A673 (cell line): ENCODE measurements at regions of chr5 and their contacts with region 1.

Region 1: DNA sequence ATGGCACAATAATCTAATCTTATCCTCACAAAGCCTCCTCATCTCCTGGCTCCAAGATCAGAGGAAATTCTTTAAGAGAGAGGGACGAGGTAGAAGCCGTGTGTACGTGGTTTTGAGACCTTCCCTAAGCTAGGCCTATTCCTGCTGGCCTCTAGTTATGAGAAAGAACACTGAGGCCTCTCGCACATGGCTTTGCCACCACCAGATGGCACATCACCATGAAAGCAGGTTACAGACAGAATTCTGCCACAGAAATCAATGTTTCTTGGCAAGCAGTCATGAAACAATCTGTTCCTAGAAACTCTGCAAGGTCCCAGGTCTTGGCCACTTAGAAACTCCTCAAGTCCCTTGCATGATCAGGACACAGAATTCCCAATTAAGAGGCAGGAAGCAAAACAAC is 268.2 kb upstream of the TAS2R1 start:
- DNase-seq: peak; percentile 13
- H3K4me3 ChIP-seq: no peak overlapping the region
- H3K27ac ChIP-seq: no peak overlapping the region
- H3K4me1 ChIP-seq: no peaks in the 10 kb centered on the region
- H3K27me3 ChIP-seq: peaks cover 4% of the 10 kb centered on the region
- CTCF ChIP-seq: peak; percentile 48

Region 2: DNA sequence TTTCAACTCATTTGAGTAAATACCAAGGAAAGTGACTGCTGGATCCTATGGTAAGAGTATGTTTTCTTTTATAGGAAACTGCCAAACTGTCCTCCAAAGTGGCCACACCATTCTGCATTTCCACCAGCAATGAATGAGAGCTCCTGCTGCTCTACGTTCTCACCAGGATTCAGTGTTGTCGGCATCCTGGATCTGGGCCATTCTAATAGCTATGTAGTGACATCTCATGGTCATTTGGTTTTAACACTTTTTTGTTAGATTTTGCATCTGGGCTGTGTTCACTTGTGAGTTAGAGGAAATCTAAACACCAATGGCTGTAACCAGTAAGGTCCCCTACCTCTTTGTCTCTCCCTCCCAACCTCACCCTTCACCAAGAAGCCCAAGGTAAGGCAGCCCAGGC is 235.5 kb after region 1 on chr5:
- CTCF ChIA-PET with region 1: no interaction called
- POLR2A ChIA-PET with region 1: no interaction called
- intact Hi-C with region 1: loop called (anchors 10 kb)
- DNase-seq: peak; percentile 12
- H3K4me3 ChIP-seq: no peak overlapping the region
- H3K27ac ChIP-seq: no peak overlapping the region
- H3K4me1 ChIP-seq: no peaks in the 10 kb centered on the region
- H3K27me3 ChIP-seq: peaks cover 29% of the 10 kb centered on the region
- CTCF ChIP-seq: no peak